ENCODE measurements at regions of chr19 and their contacts with region 1.

Region 1: GRCh38 chr19:42440357-42441048 is 2.2 kb downstream of the CXCL17 start:
- H3K4me3 ChIP-seq: no peak overlapping the region
- H3K27ac ChIP-seq: no peak overlapping the region
- H3K4me1 ChIP-seq: peaks cover 10% of the 10 kb centered on the region
- CTCF ChIP-seq: peak; percentile 80

Region 2: DNA sequence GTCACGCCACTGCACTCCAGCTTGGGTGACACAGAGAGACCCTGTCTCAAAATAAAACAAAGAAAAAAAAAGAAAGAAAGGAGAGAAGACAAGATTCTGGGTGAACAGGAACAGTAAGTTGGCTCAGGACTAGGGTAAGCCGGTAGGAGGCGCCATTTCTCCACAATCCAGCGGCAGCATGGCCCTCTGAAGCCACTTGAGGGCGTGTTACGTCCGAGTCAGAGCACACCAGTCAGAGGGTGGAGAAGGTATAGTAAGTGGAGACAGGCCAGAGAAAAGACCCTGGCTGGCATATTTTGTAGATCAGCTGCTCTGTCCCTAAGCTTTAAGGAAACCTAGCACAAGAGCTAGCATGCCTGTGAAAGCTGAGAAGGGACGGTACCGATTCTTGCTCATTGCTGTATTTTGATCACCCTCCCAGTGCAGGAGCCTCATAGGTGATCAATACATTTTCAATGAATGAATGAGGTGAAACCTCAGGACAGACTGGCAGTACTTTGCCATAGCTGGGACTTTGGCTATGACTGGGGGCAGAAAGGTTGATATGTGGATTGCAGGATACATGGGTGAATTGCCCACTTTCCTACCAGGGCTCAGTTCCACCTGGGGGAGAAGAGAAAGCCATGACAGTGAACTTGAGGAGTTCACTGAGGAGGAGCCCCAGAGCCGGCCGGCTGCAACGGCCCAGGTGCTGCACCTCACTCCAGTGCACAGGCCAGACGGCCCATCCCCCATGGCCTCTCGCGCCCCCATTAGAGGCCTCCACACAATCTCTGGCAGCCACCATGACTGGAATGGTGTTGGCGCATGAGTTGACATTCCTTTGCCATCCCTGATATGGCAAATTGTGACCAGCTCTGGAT is 331.7 kb before region 1 on chr19:
- CTCF ChIA-PET with region 1: interaction called, 51 read pairs
- POLR2A ChIA-PET with region 1: no interaction called
- H3K4me3 ChIP-seq: no peak overlapping the region
- H3K27ac ChIP-seq: no peak overlapping the region
- H3K4me1 ChIP-seq: peaks cover under 1% of the 10 kb centered on the region; the same call in 1 of the 2 replicates
- CTCF ChIP-seq: peak; percentile 100

Region 3: DNA sequence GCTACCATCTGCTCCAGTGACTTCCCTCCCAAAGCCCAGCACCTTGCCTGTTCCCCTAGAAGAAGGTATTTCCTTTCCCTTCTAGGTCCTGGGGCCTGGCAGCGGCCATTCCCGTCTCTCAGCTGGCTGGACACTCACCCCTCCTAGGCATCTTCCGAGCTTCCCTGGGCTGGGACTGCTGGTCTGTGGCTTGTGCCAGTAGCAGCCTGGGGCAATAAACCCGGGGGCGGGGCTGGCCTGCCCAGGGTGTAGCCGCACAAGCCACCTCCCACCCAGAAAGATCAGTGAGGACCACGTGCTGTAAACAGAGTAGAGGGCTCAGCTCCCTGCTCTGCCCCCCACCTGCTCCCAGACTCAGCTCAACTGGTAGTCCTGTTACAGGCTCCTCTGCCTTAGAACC is 28.3 kb before region 1 on chr19:
- CTCF ChIA-PET with region 1: interaction called, 98 read pairs
- POLR2A ChIA-PET with region 1: interaction called, 3 read pairs
- H3K4me3 ChIP-seq: no peak overlapping the region
- H3K27ac ChIP-seq: peak overlapping the region; percentile 11; the same call in 1 of the 2 replicates
- H3K4me1 ChIP-seq: peaks cover 8% of the 10 kb centered on the region
- CTCF ChIP-seq: no peak

Region 4: GRCh38 chr19:42461700-42462324 is 21.3 kb after region 1 on chr19:
- CTCF ChIA-PET with region 1: interaction called, 51 read pairs
- POLR2A ChIA-PET with region 1: no interaction called
- H3K4me3 ChIP-seq: no peak overlapping the region
- H3K27ac ChIP-seq: no peak overlapping the region
- H3K4me1 ChIP-seq: peaks cover 7% of the 10 kb centered on the region
- CTCF ChIP-seq: no peak

Region 5: GRCh38 chr19:42480335-42481095 is 40.0 kb after region 1 on chr19:
- CTCF ChIA-PET with region 1: interaction called, 21 read pairs
- POLR2A ChIA-PET with region 1: no interaction called
- H3K4me3 ChIP-seq: no peak overlapping the region
- H3K27ac ChIP-seq: no peak overlapping the region
- H3K4me1 ChIP-seq: peaks cover 7% of the 10 kb centered on the region
- CTCF ChIP-seq: no peak

Region 6: DNA sequence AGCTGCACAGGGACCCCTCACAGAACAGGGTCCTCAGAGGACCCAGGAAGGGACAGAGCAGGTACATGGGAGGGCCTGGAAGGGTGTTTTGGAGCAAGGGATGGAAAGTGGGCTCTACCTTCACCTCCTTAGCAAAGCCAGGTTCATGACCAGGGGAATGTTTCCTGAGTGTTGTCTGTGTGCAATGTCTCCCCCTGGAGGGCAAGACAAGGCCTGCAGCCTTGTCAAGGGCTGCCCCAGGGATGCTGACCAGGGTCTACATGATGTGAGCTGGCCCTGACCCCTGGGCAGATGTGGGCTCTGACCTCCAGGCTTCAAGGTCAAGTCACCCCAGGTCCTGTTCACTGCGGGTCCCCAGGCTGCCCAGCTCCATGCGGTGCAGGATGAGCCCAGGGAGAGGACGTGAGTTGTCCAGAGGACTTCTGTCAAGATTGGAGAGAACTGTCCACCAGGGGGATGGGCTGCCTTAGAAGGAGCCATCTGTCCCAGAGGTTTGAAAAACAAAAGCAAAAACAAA is 88.8 kb after region 1 on chr19:
- CTCF ChIA-PET with region 1: interaction called, 67 read pairs
- POLR2A ChIA-PET with region 1: no interaction called
- H3K4me3 ChIP-seq: no peak overlapping the region
- H3K27ac ChIP-seq: no peak overlapping the region
- H3K4me1 ChIP-seq: no peaks in the 10 kb centered on the region
- CTCF ChIP-seq: peak; percentile 91

Region 7: DNA sequence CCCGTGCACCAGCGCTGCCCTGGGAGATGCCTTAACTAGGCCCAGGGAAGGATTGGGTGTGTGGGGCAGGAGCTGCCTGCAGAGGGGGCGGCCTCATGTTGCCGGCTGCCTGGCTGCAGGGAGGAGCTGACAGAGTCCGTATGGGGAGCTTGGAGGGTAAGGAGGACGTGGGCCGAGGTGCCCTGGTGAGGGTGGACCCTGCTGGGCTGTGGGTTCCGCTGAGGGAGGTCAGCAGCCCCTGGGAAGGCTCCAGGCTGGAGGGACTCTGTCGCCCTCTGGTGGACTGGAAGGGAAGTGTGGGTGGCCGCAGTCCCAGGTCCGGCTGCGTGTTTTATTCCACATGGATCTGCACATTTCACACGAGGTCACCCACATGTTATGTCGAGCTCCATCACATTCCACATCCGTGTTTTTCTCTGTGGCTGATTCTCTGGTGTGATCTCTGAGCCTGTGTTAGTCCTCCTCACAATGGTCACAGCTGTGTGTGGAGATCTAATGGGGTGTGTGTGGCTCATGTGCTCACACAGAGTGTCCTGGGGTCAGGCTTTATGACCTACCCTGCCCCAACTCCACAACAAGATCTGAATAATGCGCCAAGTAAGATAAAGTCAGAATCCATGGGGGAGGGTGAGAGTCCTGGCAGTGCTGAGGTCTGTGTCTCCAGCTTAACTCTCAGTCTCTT is 156.0 kb after region 1 on chr19:
- CTCF ChIA-PET with region 1: interaction called, 20 read pairs
- POLR2A ChIA-PET with region 1: no interaction called
- H3K4me3 ChIP-seq: no peak overlapping the region
- H3K27ac ChIP-seq: no peak overlapping the region
- H3K4me1 ChIP-seq: no peaks in the 10 kb centered on the region
- CTCF ChIP-seq: peak; percentile 94